ENCODE measurements at regions of chr3 and their contacts with region 1.

Region 1: GRCh38 chr3:45938864-45939263 is 4.4 kb upstream of the CXCR6 start:
- DNase-seq: peak; percentile 55
- ATAC-seq: peak; percentile 86
- H3K4me3 Mint-ChIP-seq: no peak overlapping the region
- H3K27ac Mint-ChIP-seq: no peak overlapping the region
- H3K4me1 Mint-ChIP-seq: peaks cover 5% of the 10 kb centered on the region
- H3K27me3 Mint-ChIP-seq: no peaks in the 10 kb centered on the region
- CTCF ChIP-seq: peak; percentile 68

Region 2: GRCh38 chr3:46368569-46368968 is 429.7 kb after region 1 on chr3:
- CTCF ChIA-PET with region 1: interaction called, 20 read pairs
- POLR2A ChIA-PET with region 1: no interaction called
- intact Hi-C with region 1: loop called (anchors 2 kb)
- DNase-seq: peak; percentile 33
- ATAC-seq: peak; percentile 91
- H3K4me3 Mint-ChIP-seq: peak overlapping the region; percentile 7
- H3K27ac Mint-ChIP-seq: no peak overlapping the region
- H3K4me1 Mint-ChIP-seq: peaks cover 34% of the 10 kb centered on the region
- H3K27me3 Mint-ChIP-seq: peaks cover 2% of the 10 kb centered on the region
- CTCF ChIP-seq: no peak

Region 3: DNA sequence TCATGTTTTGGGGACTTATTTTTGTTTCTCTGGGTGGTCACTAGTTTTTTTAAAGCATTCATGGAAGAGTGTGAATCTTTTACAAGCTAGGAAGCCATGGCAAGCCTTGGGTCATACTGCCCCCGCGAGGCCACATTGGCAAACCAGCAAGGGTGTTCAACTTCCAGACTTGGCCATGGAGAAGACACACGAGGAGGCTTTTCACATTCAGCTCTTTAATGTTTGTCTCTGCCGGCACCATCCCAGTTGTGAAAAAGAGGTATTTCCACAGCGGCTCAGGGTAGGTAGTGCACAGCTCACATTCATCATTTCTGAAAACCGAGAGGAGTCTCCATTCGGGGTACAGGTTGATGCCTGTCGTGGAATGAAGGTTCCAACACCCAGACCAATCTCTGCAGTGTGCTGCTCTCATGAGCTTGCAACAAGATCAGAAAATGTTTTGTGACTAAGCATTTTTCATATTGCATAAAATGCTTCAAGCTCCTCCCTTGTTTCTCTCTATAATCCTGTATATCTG is 439.6 kb after region 1 on chr3:
- CTCF ChIA-PET with region 1: interaction called, 18 read pairs
- POLR2A ChIA-PET with region 1: no interaction called
- intact Hi-C with region 1: loop called (anchors 1 kb)
- DNase-seq: peak; percentile 42
- ATAC-seq: peak; percentile 40
- H3K4me3 Mint-ChIP-seq: no peak overlapping the region
- H3K27ac Mint-ChIP-seq: no peak overlapping the region
- H3K4me1 Mint-ChIP-seq: peaks cover 43% of the 10 kb centered on the region
- H3K27me3 Mint-ChIP-seq: no peaks in the 10 kb centered on the region
- CTCF ChIP-seq: no peak

Region 4: GRCh38 chr3:46427916-46428833 is 489.3 kb after region 1 on chr3:
- CTCF ChIA-PET with region 1: interaction called, 4 read pairs
- POLR2A ChIA-PET with region 1: no interaction called
- intact Hi-C with region 1: loop called (anchors 1 kb)
- DNase-seq: no peak
- ATAC-seq: no peak
- H3K4me3 Mint-ChIP-seq: no peak overlapping the region
- H3K27ac Mint-ChIP-seq: no peak overlapping the region
- H3K4me1 Mint-ChIP-seq: no peaks in the 10 kb centered on the region
- H3K27me3 Mint-ChIP-seq: no peaks in the 10 kb centered on the region
- CTCF ChIP-seq: no peak

Region 5: DNA sequence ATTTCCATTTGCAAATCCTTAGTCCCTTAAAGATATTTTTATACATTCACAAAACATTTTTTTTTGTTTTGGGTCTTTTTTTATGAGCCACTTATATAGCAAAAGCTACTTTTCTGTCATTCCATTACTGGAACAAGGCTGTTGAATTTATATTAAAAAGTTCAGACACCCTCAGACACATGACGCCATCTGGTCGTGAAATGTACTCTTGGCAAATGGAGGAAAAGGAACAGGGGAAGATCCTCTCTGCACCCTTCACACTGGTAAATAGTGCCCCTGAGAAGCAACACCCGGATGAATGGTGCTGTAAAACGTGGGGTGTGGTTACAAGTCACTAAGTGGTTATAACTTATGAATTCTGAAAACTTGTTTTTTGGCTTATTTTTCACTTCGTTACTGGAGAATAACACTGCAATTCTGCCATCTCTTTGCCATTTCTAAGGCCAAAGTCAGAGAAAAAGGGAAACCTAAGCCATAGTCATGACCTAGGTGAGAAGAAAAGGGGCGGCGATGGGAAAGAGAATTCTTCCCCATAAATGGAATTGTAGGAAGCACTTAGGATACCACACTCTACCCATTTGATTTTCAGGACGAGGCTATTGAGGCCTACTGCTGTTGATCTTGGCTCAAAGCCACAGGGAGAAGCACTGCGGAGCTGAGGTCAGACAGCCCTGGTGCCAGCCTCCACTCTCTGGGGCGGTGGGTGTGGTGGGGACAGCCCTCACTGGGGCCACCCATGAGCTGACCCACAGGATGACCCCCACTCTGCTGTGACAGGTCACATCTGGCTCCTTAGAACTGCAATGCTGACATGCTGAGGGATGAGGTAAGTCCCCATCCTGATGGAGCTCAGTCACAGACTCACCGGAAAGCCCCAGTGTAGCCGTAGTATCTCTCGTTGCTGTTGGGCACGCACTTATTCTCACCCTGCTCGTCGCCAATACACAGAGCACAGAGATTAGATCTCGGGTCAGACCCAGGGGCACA is 504.0 kb after region 1 on chr3:
- CTCF ChIA-PET with region 1: interaction called, 3 read pairs
- POLR2A ChIA-PET with region 1: no interaction called
- intact Hi-C with region 1: loop called (anchors 5 kb)
- DNase-seq: no peak
- ATAC-seq: no peak
- H3K4me3 Mint-ChIP-seq: no peak overlapping the region
- H3K27ac Mint-ChIP-seq: no peak overlapping the region
- H3K4me1 Mint-ChIP-seq: peaks cover 39% of the 10 kb centered on the region
- H3K27me3 Mint-ChIP-seq: no peaks in the 10 kb centered on the region
- CTCF ChIP-seq: no peak

Measured in activated B cell treated with CpG ODN at 0.5 μM for 24 hours (primary cell).